ENCODE measurements at regions of chr7 and their contacts with region 1.

Region 1: DNA sequence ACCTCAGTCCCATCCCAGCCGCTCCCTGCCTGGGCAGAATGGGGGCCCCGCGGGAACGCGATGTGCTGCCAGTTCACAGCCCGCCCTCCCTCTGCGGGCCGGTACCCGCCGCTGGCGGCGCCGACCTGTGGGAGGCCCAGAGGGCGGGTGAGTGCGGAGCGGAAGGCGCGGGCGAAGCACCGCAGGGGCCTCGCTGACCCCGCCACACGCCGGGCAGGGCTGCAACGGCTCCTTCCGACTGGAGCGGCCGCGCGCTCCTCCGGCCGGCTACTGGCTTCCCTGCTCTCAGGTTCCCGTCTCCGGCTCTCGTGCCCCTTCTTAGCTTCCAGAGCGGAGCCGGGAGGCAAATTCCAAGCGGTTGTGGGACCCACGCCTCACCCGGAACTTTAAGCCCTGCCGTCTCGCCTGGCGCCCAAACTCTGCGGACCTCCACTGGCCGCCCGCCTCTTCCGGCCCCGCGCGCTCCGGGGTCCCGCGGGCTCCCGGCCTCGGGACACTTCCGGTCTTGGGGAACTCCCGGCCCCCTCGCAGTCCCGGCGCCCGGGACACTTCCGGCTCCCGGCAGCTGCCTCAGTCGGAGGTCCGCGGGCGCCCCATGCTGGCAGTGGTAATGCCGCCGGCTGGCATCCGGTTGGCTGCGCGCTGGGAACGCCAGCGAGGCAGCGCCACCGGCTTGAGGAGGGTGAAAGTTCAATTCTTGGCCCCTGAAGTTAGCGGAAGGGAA is at the start of gene CYREN:
- H3K4me3 Mint-ChIP-seq: peak within 1 kb of the TSS; percentile 92
- H3K27ac Mint-ChIP-seq: peak within 1 kb of the TSS; percentile 99
- H3K4me1 Mint-ChIP-seq: peaks cover 60% of the 10 kb centered on the region
- H3K27me3 Mint-ChIP-seq: no peaks in the 10 kb centered on the region

Region 2: GRCh38 chr7:134646425-134647305 is 523.8 kb before region 1 on chr7 and contains the start of gene BPGM:
- intact Hi-C with region 1: loop called (anchors 10 kb)
- H3K4me3 Mint-ChIP-seq: no peak within 1 kb of the TSS
- H3K27ac Mint-ChIP-seq: no peak within 1 kb of the TSS
- H3K4me1 Mint-ChIP-seq: peaks cover 25% of the 10 kb centered on the region
- H3K27me3 Mint-ChIP-seq: peaks cover 9% of the 10 kb centered on the region

Region 3: GRCh38 chr7:134737566-134738345 is 432.7 kb before region 1 on chr7:
- intact Hi-C with region 1: loop called (anchors 5 kb)
- H3K4me3 Mint-ChIP-seq: peak overlapping the region; percentile 39
- H3K27ac Mint-ChIP-seq: peak overlapping the region; percentile 97
- H3K4me1 Mint-ChIP-seq: peaks cover 78% of the 10 kb centered on the region
- H3K27me3 Mint-ChIP-seq: no peaks in the 10 kb centered on the region

Region 4: DNA sequence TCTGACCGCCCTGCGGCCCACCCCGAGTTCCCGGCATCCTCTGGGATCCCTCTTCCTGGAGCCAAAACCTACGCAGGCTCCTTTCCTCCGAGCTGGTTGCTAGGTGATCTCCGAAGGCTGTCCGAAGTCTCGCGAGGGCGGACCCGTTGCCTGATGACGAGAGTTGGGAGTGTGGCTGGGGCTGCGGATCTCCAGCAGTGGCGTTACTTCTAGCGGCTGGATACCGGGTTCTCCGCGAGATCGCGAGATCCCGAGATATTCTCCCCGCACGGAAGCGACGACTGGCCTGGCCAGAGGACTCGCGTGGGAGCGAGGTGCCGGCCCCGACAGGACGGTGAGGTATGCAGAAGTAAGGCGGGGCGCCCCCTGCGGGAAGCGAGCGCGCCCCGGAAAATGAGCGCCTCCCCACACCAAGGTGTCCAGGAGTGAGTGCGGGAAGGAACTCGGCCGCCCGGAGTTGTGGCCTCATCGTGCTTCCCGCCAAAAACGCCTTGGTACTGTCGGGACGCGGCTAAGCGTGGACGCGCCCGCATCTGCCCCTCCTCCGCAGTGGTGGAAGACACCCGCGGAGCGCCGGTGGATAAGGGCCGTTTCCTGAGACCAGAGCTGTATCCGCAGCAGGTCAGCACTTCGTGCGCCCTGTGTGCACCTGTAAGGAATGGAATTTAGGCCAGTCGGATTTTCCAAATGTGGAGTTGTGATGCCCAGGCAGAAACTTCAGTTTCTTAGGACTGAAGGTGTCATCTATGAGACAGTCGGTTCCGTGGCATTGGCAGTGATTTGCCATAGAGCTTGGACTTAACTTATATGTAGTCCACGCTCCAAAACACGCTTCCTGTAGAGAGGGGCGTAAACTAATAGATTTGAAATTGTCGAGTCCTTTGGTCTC is 183.8 kb before region 1 on chr7 and contains the start of gene AGBL3:
- intact Hi-C with region 1: loop called (anchors 2 kb)
- H3K4me3 Mint-ChIP-seq: peak within 1 kb of the TSS; percentile 98
- H3K27ac Mint-ChIP-seq: peak within 1 kb of the TSS; percentile 95
- H3K4me1 Mint-ChIP-seq: peaks cover 12% of the 10 kb centered on the region
- H3K27me3 Mint-ChIP-seq: no peaks in the 10 kb centered on the region

Region 5: DNA sequence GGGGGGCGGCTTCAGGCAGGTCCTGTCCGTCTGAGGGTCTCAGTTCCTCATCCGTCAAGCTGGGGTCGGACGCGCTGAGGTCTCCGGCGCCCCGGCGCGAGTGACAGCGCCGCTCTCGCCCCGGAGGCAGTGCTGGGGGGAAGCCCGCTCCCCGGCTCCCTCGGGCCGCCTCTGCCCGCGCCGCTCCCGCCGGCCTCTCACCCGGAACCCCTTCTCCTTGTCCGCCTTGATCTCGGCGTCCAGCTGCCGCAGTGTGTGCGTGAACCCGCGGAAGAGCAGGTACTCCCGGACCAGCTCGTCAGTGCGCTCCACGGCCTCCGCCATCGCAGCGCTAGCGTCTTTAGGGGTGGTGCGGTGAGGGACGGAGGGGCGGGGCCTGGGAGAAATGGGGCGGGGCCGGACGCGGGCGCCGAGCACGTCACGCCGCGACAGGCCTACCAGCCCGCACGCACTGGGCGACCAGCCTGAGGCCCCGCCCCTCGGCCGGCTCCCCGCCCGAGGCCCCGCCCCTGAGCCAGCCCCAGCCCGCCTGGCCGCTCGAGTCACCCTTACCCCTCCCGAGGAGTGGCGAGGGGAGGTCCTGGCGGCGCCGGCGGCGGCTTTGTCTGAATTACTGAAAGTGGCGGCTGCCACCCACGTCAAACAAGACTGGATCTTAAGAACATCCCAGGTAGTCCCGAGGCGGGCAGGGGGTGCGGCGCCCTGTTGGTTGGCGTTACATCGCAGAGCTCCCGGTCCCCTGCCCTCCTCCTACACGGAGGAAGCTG is 40.9 kb after region 1 on chr7 and contains the start of gene WDR91:
- intact Hi-C with region 1: loop called (anchors 2 kb)
- H3K4me3 Mint-ChIP-seq: peak within 1 kb of the TSS; percentile 91
- H3K27ac Mint-ChIP-seq: peak within 1 kb of the TSS; percentile 90
- H3K4me1 Mint-ChIP-seq: peaks cover 43% of the 10 kb centered on the region
- H3K27me3 Mint-ChIP-seq: peaks cover 19% of the 10 kb centered on the region

Region 6: GRCh38 chr7:135240441-135240840 is 70.0 kb after region 1 on chr7:
- intact Hi-C with region 1: no loop called
- H3K4me3 Mint-ChIP-seq: no peak overlapping the region
- H3K27ac Mint-ChIP-seq: no peak overlapping the region
- H3K4me1 Mint-ChIP-seq: peaks cover 13% of the 10 kb centered on the region
- H3K27me3 Mint-ChIP-seq: peaks cover 72% of the 10 kb centered on the region